ENCODE measurements at regions of chr1 and their contacts with region 1.

Region 1: GRCh38 chr1:184563308-184563707 is 176.5 kb downstream of the C1orf21 start:
- DNase-seq: no peak
- H3K4me3 ChIP-seq: no peak overlapping the region
- H3K27ac ChIP-seq: peak overlapping the region in 1 of 4 donors; percentile 72
- H3K4me1 ChIP-seq: peaks cover 4 to 42% (median 10%) of the 10 kb centered on the region in 3 donors
- H3K27me3 ChIP-seq: no peaks in the 10 kb centered on the region
- CTCF ChIP-seq: peak in 5 of 6 experiments; percentile 39 to 67 (median 48)
- POLR2A ChIP-seq: no peak

Region 2: GRCh38 chr1:184242507-184242943 is 320.8 kb before region 1 on chr1:
- intact Hi-C with region 1: loop called (anchors 10 kb)
- DNase-seq: no peak
- H3K4me3 ChIP-seq: no peak overlapping the region
- H3K27ac ChIP-seq: peak overlapping the region in 1 of 4 donors; percentile 21
- H3K4me1 ChIP-seq: peaks cover 0 to 7% (median 0%) of the 10 kb centered on the region in 3 donors
- H3K27me3 ChIP-seq: no peaks in the 10 kb centered on the region
- CTCF ChIP-seq: peak in 1 of 6 experiments; percentile 16
- POLR2A ChIP-seq: no peak

Region 3: GRCh38 chr1:184386312-184387068 is 176.8 kb before region 1 on chr1 and contains the start of gene C1orf21:
- intact Hi-C with region 1: loop called (anchors 10 kb)
- DNase-seq: peak; percentile 6
- H3K4me3 ChIP-seq: peak within 1 kb of the TSS; percentile 62 to 91 (median 76)
- H3K27ac ChIP-seq: peak within 1 kb of the TSS; percentile 87 to 94 (median 90)
- H3K4me1 ChIP-seq: peaks cover 13 to 46% (median 25%) of the 10 kb centered on the region in 3 donors
- H3K27me3 ChIP-seq: no peaks in the 10 kb centered on the region
- CTCF ChIP-seq: no peak
- POLR2A ChIP-seq: peak in 1 of 4 donors; percentile 91
- total RNA-seq, gene C1orf21: 14.6 to 55.7 (median 36.2) TPM

Measured in esophagus squamous epithelium (tissue), 5 donors.